Right ventricle myocardium inferior (tissue), 1 donor: ENCODE measurements at regions of chr9 and their contacts with region 1.

Region 1: DNA sequence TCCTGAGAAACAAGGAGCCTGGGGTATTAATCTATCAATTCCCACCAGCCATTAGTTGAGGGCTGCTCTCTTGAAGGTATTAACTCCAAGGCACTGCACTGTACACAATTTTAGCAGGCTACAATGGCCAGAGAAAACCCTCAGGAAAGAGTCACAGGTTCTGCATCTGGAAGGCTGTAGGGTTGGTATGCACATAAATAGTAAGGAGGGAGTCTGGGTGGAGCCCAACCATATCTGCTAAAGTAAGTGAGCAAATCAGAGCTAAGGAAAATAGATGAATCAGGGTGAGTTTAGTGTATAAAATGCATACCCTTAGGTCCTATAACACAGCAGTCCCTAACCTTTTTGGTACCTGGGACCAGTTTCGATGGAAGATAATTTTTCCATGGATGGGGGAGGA is 18.2 kb downstream of the TMEM215 start:
- DNase-seq: no peak
- ATAC-seq: no peak

Region 2: GRCh38 chr9:32918628-32919027 is 117.1 kb after region 1 on chr9:
- intact Hi-C with region 1: loop called (anchors 10 kb)
- DNase-seq: no peak
- ATAC-seq: no peak